Activated naive CD4-positive, alpha-beta T cell treated with anti-CD3 and anti-CD28 coated beads for 36 hours (primary cell): ENCODE measurements at regions of chr10 and their contacts with region 1.

Region 1: GRCh38 chr10:31928549-31929260 is at the start of gene ARHGAP12:
- DNase-seq: peak; percentile 78
- H3K4me3 Mint-ChIP-seq: peak within 1 kb of the TSS; percentile 88
- H3K27ac Mint-ChIP-seq: peak within 1 kb of the TSS; percentile 30
- H3K4me1 Mint-ChIP-seq: peaks cover 37% of the 10 kb centered on the region
- H3K27me3 Mint-ChIP-seq: no peaks in the 10 kb centered on the region
- total RNA-seq, gene ARHGAP12: 2.3 to 2.6 TPM

Region 2: GRCh38 chr10:31707093-31708039 is 221.3 kb before region 1 on chr10:
- CTCF ChIA-PET with region 1: no interaction called
- intact Hi-C with region 1: loop called (anchors 5 kb)
- DNase-seq: peak; percentile 85
- H3K4me3 Mint-ChIP-seq: peak overlapping the region; percentile 5
- H3K27ac Mint-ChIP-seq: peak overlapping the region; percentile 83
- H3K4me1 Mint-ChIP-seq: peaks cover 22% of the 10 kb centered on the region
- H3K27me3 Mint-ChIP-seq: no peaks in the 10 kb centered on the region

Region 3: GRCh38 chr10:31759799-31760626 is 168.7 kb before region 1 on chr10:
- CTCF ChIA-PET with region 1: no interaction called
- intact Hi-C with region 1: loop called (anchors 5 kb)
- DNase-seq: peak; percentile 96
- H3K4me3 Mint-ChIP-seq: peak overlapping the region; percentile 94
- H3K27ac Mint-ChIP-seq: peak overlapping the region; percentile 95
- H3K4me1 Mint-ChIP-seq: peaks cover 18% of the 10 kb centered on the region
- H3K27me3 Mint-ChIP-seq: no peaks in the 10 kb centered on the region

Region 4: DNA sequence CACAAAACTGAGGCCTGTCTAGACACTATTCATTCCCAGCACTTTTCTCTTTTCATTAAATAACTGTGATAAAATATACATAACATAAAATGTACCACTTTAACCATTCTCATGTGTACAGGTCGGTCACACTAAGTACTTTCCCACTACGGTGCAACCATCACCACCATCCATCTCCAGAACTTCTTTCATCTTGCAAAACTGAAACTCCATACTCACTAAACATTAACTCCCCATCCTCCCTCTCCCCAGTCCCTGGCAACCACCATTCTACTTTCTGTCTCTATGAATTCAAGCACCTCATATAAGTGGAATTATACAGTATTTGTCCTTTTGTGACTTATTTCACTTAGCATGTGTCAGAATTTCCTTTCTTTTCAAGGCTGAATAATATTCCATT is 53.1 kb before region 1 on chr10:
- CTCF ChIA-PET with region 1: no interaction called
- intact Hi-C with region 1: loop called (anchors 1 kb)
- DNase-seq: peak; percentile 17
- H3K4me3 Mint-ChIP-seq: no peak overlapping the region
- H3K27ac Mint-ChIP-seq: no peak overlapping the region
- H3K4me1 Mint-ChIP-seq: peaks cover 25% of the 10 kb centered on the region
- H3K27me3 Mint-ChIP-seq: no peaks in the 10 kb centered on the region

Region 5: GRCh38 chr10:32055813-32056600 is 127.3 kb after region 1 on chr10 and contains the start of gene KIF5B:
- CTCF ChIA-PET with region 1: no interaction called
- intact Hi-C with region 1: loop called (anchors 1 kb)
- DNase-seq: peak; percentile 84
- H3K4me3 Mint-ChIP-seq: peak within 1 kb of the TSS; percentile 96
- H3K27ac Mint-ChIP-seq: peak within 1 kb of the TSS; percentile 92
- H3K4me1 Mint-ChIP-seq: peaks cover 39% of the 10 kb centered on the region
- H3K27me3 Mint-ChIP-seq: no peaks in the 10 kb centered on the region
- total RNA-seq, gene KIF5B: 64.9 to 67.8 TPM

Region 6: GRCh38 chr10:32378363-32379317 is 449.9 kb after region 1 on chr10:
- CTCF ChIA-PET with region 1: interaction called, 3 read pairs
- intact Hi-C with region 1: loop called (anchors 5 kb)
- DNase-seq: peak; percentile 97
- H3K4me3 Mint-ChIP-seq: no peak overlapping the region
- H3K27ac Mint-ChIP-seq: no peak overlapping the region
- H3K4me1 Mint-ChIP-seq: peaks cover 13% of the 10 kb centered on the region
- H3K27me3 Mint-ChIP-seq: no peaks in the 10 kb centered on the region

Region 7: GRCh38 chr10:33273295-33274002 is 1344.7 kb after region 1 on chr10:
- CTCF ChIA-PET with region 1: no interaction called
- intact Hi-C with region 1: no loop called
- DNase-seq: no peak
- H3K4me3 Mint-ChIP-seq: no peak overlapping the region
- H3K27ac Mint-ChIP-seq: no peak overlapping the region
- H3K4me1 Mint-ChIP-seq: no peaks in the 10 kb centered on the region
- H3K27me3 Mint-ChIP-seq: peaks cover 15% of the 10 kb centered on the region